ENCODE measurements at regions of chr6 and their contacts with region 1.

Region 1: GRCh38 chr6:16583144-16583762 is 178.0 kb downstream of the ATXN1 start:
- DNase-seq: no peak
- ATAC-seq: no peak
- H3K4me3 Mint-ChIP-seq: peak overlapping the region; percentile 32
- H3K27ac Mint-ChIP-seq: no peak overlapping the region
- H3K4me1 Mint-ChIP-seq: peaks cover 18% of the 10 kb centered on the region
- H3K27me3 Mint-ChIP-seq: no peaks in the 10 kb centered on the region
- CTCF ChIP-seq: no peak

Region 2: DNA sequence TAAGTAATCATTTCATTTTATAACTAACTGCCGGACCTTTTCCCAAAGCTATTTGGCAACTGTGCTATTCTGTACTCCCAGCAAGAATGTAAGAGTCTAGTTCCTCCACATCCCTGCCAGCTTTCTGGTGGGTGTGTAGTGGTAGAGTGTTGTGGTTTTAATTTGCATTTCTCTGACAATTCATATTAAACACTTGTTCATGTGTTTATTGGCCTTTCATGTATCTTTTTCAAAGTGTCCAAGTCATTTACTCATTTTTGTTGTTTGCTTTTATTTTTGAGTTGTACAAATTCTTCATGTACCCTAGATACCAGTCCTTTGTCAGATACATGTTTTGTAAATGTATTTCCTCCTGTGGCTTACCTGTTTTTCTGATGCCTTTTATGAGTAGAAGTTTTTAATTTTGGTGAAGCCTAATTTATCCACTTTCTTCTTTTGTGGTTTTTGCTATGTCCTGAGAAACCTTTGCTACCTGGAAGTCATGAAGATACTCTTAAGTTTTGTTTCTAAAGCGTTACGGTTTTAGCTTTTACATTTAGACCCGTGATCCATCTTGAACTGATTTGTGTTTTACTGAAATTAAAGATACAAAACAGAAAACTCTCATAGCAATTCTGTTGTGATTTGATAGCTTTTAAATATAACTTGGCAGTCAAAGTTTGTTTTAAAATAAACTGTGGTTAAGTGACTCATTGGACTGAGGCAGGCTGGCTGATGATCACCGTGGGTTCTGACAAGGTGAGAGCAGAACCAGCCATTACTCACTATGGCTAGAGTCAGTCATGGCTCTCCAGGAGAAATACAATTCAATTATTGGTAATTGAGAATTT is 446.4 kb before region 1 on chr6:
- CTCF ChIA-PET with region 1: no interaction called
- POLR2A ChIA-PET with region 1: no interaction called
- intact Hi-C with region 1: no loop called
- DNase-seq: no peak
- ATAC-seq: peak; percentile 69
- H3K4me3 Mint-ChIP-seq: peak overlapping the region; percentile 48
- H3K27ac Mint-ChIP-seq: peak overlapping the region; percentile 65
- H3K4me1 Mint-ChIP-seq: peaks cover 72% of the 10 kb centered on the region
- H3K27me3 Mint-ChIP-seq: no peaks in the 10 kb centered on the region
- CTCF ChIP-seq: no peak

Region 3: GRCh38 chr6:16548121-16548520 is 35.1 kb before region 1 on chr6:
- CTCF ChIA-PET with region 1: no interaction called
- POLR2A ChIA-PET with region 1: interaction called, 3 read pairs
- intact Hi-C with region 1: loop called (anchors 5 kb)
- DNase-seq: no peak
- ATAC-seq: no peak
- H3K4me3 Mint-ChIP-seq: no peak overlapping the region
- H3K27ac Mint-ChIP-seq: no peak overlapping the region
- H3K4me1 Mint-ChIP-seq: no peaks in the 10 kb centered on the region
- H3K27me3 Mint-ChIP-seq: no peaks in the 10 kb centered on the region
- CTCF ChIP-seq: no peak

Region 4: GRCh38 chr6:17865798-17866725 is 1282.8 kb after region 1 on chr6:
- CTCF ChIA-PET with region 1: no interaction called
- POLR2A ChIA-PET with region 1: no interaction called
- intact Hi-C with region 1: no loop called
- DNase-seq: no peak
- ATAC-seq: no peak
- H3K4me3 Mint-ChIP-seq: no peak overlapping the region
- H3K27ac Mint-ChIP-seq: no peak overlapping the region
- H3K4me1 Mint-ChIP-seq: no peaks in the 10 kb centered on the region
- H3K27me3 Mint-ChIP-seq: no peaks in the 10 kb centered on the region
- CTCF ChIP-seq: no peak